Left cardiac atrium (tissue), 4 donors: ENCODE measurements at regions of chr12 and their contacts with region 1.

Region 1: GRCh38 chr12:39365364-39366001 is 77.4 kb downstream of the KIF21A start:
- DNase-seq: no peak
- ATAC-seq: no peak

Region 2: DNA sequence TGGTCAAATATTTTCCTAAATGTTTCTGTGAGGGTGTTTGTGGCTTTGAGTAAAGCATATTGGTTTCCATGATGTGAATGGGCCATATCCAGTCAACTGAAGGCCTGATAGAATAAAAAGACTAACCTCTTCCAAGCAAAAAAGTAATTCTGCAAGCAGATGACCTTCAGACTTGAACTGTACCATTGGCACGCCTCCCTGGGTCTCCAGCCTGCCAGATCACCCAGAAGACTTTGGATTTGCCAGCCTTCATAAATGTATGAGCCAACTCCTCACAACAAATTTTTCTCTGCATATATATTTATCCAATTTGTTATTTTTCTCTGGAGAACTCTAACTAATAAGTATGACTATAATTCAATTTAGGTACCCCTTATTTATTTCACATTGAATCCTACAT is 112.9 kb before region 1 on chr12:
- intact Hi-C with region 1: no loop called
- DNase-seq: no peak
- ATAC-seq: no peak

Region 3: DNA sequence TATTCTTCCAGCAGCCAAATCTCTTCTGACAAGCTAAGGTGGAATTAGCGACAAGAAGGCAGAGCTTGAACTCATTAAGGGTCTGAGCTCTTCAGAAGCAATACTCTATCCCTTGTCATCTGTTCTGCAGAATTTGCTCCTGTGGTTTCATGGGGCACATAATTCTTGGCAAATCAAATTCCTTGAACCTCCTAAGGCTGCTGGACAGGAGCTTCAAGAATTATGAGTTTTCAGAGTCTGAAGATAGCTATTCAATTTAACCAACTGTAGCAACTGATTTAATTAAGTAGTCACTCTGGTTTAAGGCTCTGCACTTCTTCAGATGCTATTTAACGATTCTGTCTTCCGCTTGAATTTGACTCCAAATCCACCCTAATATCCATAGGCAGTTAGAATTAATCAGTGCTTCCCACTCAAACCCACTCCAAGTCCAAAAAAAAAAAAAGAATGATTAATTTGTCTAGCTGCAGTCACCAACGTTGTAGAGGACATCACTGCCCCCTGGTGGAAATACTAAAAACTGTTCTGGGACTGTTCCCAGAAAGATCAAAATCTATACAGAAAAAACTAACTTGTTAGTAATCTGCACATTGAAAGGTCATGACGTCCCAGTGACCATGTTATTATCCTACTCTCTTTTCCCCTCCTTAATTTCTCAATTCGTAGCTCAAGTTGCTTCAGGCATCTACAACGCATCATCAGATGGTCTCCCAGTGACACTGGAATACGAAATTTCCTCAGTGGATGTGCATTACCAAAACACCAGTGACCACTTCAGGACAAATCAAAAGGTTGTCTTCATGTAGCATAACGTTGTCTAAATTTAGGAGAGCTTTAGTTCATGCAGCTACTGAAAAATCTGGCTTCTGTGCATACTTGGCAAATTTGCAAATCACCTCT is 92.4 kb before region 1 on chr12:
- intact Hi-C with region 1: no loop called
- DNase-seq: no peak
- ATAC-seq: no peak

Region 4: DNA sequence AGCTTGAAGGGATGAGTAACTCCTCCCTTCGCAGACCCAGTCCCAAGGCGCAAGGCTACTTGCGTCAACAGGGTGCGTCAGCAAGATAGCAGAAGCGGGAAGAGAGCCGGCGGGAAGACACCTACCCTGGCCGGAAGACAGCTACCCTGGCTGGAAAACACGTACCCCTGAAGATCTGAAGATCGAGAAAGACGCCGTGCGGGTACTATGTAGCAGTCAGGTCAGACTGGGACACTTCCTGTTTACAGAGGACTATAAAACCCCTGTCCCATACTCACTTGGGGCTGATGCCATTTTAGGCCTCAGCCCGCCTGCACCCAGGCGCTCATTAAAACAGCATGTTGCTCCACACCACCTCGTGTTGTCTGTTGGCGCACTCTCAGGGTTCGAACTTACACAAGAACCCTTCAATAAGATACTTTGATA is 173.2 kb after region 1 on chr12:
- intact Hi-C with region 1: loop called in 1 of 2 experiments (anchors 10 kb)
- DNase-seq: peak; percentile 20
- ATAC-seq: no peak